ENCODE measurements at regions of chr5 and their contacts with region 1.

Region 1: DNA sequence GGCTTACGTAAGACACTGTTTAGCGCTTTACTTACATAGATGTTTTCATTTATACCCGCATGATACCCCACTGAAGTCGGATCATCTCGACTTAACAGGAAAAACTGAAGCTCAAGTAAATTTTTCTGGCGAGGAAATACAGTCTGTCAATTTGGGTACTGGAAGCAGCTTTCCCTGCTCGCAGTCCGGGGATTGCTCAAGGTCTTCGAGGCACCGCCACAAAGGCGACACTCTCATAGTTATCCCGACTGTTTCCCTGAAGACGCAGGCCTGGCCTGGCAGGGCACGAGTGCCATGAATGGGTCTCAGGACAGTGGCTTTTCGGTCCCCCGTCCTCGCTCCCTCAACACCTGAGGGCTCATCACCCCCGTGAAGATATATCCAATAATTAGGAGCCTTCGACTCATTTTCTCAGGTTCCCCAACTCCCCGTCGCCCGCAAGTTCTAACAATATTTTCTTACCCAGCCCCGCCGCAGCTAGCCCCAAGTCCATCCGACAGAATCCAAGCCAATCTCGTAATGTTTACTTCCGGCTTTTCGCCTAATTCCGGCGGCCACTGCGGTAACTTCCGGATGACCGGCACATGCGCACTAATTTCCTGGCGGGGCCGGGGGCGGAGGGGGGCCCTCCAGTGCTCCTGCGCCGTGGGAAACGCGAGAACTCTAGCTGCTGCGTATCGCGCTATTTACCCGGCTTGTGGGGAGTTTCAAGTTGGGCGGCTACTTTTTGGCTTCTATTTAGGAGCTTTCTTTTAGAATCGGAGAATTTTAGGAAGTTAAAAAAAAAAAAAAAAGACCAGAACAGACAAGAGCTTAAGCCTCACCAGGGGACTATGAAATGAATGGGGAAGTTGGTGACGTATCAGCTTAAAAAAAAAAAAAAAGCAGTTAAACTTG is at the start of gene SLU7:
- DNase-seq: peak; percentile 92
- H3K4me3 ChIP-seq: peak within 1 kb of the TSS; percentile 75 to 89
- H3K27ac ChIP-seq: peak within 1 kb of the TSS; percentile 86 to 88
- H3K4me1 ChIP-seq: peaks cover 2% of the 10 kb centered on the region
- H3K27me3 ChIP-seq: no peaks in the 10 kb centered on the region
- CTCF ChIP-seq: no peak
- POLR2A ChIP-seq: peak; percentile 67
- total RNA-seq, gene SLU7: 67.4 to 88.0 TPM

Region 2: DNA sequence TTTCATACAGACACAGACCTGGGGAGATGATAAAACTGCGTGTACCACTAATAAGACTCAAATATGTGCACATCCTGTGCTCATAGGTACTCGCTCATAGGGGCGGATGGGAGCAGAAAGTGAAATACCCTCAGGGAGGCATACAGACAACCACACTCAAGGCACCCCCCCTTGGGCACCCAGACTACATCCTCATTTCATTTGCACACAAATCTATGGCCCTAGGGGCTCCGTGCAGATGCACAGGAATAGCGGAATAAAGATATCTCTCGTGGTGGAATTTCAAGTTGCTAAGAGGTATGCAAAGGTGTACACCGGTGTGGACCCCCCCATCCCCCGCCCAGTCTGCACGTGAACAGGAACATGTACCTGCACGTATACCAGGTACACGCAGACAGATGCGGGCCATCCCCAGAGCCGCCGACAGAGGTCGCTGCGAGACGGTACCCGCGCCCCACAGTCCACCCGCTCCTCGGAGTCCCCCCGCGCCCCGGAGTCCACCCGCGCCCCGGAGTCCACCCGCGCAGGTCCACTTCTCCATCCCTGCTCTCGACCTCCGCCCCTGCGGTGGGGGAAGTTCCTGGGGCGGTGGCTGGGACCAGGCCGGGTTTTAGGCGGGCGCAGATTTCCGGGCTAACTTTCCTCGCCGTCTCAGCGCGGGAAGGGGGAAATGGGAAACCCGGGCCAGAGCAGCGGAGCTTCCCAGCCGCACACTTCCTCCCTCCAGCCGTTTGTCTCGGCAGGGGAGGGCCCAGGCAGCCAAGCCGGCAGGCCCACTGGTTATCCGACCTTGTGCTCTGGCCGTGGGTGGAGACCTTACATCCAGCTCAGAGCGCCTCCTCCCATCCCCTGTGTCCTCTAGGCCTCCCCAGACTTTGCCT is 1087.5 kb before region 1 on chr5:
- intact Hi-C with region 1: no loop called
- DNase-seq: peak; percentile 37
- H3K4me3 ChIP-seq: peak overlapping the region; percentile 15 to 24
- H3K27ac ChIP-seq: no peak overlapping the region
- H3K4me1 ChIP-seq: no peaks in the 10 kb centered on the region
- H3K27me3 ChIP-seq: no peaks in the 10 kb centered on the region
- CTCF ChIP-seq: peak; percentile 30 to 61 (median 48)
- POLR2A ChIP-seq: no peak

Region 3: GRCh38 chr5:160159991-160160792 is 258.6 kb before region 1 on chr5:
- intact Hi-C with region 1: no loop called
- DNase-seq: no peak
- H3K4me3 ChIP-seq: no peak overlapping the region
- H3K27ac ChIP-seq: no peak overlapping the region
- H3K4me1 ChIP-seq: no peaks in the 10 kb centered on the region
- H3K27me3 ChIP-seq: no peaks in the 10 kb centered on the region
- CTCF ChIP-seq: no peak
- POLR2A ChIP-seq: no peak

Region 4: DNA sequence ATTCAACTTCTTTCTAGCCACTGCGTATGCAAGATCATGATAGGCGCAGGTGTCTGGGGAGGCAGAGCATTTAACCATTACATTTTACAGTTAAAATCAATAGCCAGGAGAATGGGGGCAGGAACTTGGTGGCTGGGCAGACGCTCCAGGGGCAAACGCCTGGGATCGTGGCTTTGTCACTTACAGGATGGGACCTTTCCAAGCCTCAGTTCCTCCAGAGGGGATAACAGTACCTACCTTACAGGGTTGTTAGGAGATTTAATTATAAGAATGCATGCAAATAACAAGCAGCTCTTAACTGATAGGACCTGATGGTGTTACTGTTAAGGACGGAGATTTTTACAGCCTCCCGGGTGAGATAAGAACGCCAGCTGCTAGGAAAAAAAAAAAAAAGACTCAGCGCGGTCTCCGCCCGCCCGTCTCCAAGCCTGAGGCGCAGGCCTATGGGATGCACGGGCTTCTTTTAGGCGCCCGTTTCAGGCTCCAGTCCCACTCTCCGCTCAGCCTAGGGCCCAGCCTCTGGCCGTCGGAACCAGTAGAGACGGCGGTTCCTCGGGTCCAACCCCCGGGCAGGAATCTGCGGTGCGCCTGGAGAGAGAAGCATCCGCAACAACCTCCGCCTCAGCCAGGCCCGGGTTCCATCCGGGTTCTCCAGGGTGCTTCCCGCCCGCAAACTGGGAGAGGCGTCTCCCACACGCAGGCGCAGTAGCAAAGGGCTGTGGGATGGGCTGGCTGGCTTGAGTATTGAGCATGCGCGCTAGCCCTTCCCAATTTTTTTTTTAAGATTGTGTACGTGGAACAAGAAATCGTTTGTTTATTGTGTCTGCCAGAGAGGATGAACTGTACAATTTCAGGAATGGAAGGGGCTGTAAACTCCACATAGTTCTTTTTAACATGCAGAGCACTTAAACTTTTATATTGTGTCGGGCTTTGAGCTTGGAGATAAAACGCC is 19.1 kb before region 1 on chr5 and contains the start of gene FAM200C:
- intact Hi-C with region 1: loop called (anchors 2 kb)
- DNase-seq: peak; percentile 86
- H3K4me3 ChIP-seq: peak within 1 kb of the TSS; percentile 54 to 60
- H3K27ac ChIP-seq: peak within 1 kb of the TSS; percentile 81 to 83
- H3K4me1 ChIP-seq: no peaks in the 10 kb centered on the region
- H3K27me3 ChIP-seq: no peaks in the 10 kb centered on the region
- CTCF ChIP-seq: no peak
- POLR2A ChIP-seq: peak; percentile 91
- total RNA-seq, gene FAM200C: 6.3 to 8.6 TPM